Activated B cell treated with CpG ODN at 0.5 μM for 24 hours (primary cell): ENCODE measurements at regions of chr16 and their contacts with region 1.

Region 1: GRCh38 chr16:2155091-2156021 is at the start of gene TRAF7:
- DNase-seq: peak; percentile 91
- ATAC-seq: peak; percentile 92
- H3K4me3 Mint-ChIP-seq: peak within 1 kb of the TSS; percentile 95
- H3K27ac Mint-ChIP-seq: peak within 1 kb of the TSS; percentile 83
- H3K4me1 Mint-ChIP-seq: peaks cover 77% of the 10 kb centered on the region
- H3K27me3 Mint-ChIP-seq: no peaks in the 10 kb centered on the region
- CTCF ChIP-seq: no peak
- total RNA-seq, gene TRAF7: 72.7 and 78.1 TPM in 2 replicates

Region 2: GRCh38 chr16:154223-155030 is 2000.9 kb before region 1 on chr16:
- CTCF ChIA-PET with region 1: no interaction called
- POLR2A ChIA-PET with region 1: no interaction called
- intact Hi-C with region 1: no loop called
- DNase-seq: peak; percentile 31
- ATAC-seq: peak; percentile 57
- H3K4me3 Mint-ChIP-seq: peak overlapping the region; percentile 78
- H3K27ac Mint-ChIP-seq: no peak overlapping the region
- H3K4me1 Mint-ChIP-seq: peaks cover 9% of the 10 kb centered on the region
- H3K27me3 Mint-ChIP-seq: peaks cover 34% of the 10 kb centered on the region
- CTCF ChIP-seq: no peak

Region 3: GRCh38 chr16:1863681-1864460 is 291.5 kb before region 1 on chr16:
- CTCF ChIA-PET with region 1: no interaction called
- POLR2A ChIA-PET with region 1: no interaction called
- intact Hi-C with region 1: loop called (anchors 2 kb)
- DNase-seq: no peak
- ATAC-seq: peak; percentile 40
- H3K4me3 Mint-ChIP-seq: no peak overlapping the region
- H3K27ac Mint-ChIP-seq: no peak overlapping the region
- H3K4me1 Mint-ChIP-seq: no peaks in the 10 kb centered on the region
- H3K27me3 Mint-ChIP-seq: peaks cover 23% of the 10 kb centered on the region
- CTCF ChIP-seq: no peak

Region 4: DNA sequence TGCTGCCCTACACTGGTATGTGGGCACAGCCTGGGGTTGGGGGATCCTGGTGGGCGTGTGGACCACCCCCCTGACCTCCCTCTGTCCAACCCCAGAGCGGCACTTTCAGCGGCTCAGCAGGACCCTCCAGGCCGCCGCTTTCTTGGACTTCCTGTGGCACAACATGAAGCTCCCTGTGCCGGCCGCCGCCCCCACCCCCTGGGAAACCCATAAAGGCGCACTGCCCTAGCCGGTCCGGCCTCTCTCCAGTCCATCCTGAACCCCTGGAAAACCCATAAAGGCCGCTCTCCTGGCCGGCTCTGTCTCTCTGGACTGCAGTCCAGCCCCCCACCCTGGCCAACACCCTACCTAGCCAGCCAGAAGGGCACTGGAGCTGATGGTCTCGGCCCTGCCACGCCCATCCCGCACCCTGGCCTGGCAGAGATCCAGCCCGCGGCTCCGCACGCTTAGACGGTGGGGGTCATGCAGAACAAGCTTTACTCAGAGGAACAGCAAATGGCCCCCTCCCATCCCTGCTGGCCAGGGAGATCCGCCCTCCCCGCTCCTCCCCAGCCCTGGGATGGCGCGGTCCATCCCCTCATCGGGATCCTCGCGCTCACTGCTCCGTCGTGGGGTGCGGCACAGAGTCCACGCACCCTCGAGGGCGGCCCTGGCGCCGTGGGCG is 176.8 kb before region 1 on chr16:
- CTCF ChIA-PET with region 1: no interaction called
- POLR2A ChIA-PET with region 1: interaction called, 11 read pairs
- intact Hi-C with region 1: no loop called
- DNase-seq: no peak
- ATAC-seq: no peak
- H3K4me3 Mint-ChIP-seq: no peak overlapping the region
- H3K27ac Mint-ChIP-seq: no peak overlapping the region
- H3K4me1 Mint-ChIP-seq: peaks cover 14% of the 10 kb centered on the region
- H3K27me3 Mint-ChIP-seq: peaks cover 14% of the 10 kb centered on the region
- CTCF ChIP-seq: no peak

Region 5: DNA sequence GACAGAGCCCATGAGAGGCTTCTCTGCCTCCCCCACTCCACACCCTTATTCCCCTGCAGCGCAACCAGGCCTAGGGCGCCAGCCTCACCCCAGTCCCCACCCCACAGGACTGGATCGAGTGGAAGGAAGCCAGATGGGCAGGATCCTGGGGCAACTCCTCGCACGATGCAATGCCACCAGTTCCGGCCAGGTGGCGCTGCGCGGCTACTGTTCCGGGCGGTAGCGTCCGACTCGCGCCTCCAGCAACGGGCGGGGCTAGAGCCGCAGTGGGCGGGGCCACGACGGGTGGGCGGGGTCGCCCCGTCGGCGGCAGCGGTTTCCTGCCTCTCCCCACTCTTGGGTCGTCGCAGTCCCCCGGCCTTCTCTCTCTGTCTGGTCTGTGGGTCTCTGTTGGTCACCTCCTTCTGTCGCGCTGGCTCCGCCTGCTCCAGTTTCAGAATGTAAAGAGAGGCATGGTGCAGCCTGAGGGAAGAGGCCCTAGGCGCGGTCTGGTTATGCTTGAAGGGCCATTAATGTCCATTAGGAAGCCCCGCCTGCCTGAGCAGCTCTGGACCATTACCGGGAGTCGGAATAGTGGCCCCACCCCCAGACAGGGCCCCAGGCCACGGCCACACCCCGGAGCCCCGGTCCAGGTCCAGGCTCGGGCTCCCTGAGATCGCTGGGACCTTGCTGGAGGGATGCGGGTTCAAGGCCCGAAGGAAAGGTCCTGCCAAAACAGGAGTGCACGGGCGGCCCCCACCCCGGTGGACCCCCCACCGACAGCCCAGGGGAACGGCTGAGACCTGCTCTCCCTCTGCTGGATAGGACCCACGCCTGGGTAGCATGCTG is 132.0 kb before region 1 on chr16:
- CTCF ChIA-PET with region 1: interaction called, 3 read pairs
- POLR2A ChIA-PET with region 1: interaction called, 21 read pairs
- intact Hi-C with region 1: loop called (anchors 1 kb)
- DNase-seq: peak; percentile 97
- ATAC-seq: peak; percentile 94
- H3K4me3 Mint-ChIP-seq: peak overlapping the region; percentile 79
- H3K27ac Mint-ChIP-seq: peak overlapping the region; percentile 73
- H3K4me1 Mint-ChIP-seq: peaks cover 24% of the 10 kb centered on the region
- H3K27me3 Mint-ChIP-seq: peaks cover 27% of the 10 kb centered on the region
- CTCF ChIP-seq: peak; percentile 82

Region 6: DNA sequence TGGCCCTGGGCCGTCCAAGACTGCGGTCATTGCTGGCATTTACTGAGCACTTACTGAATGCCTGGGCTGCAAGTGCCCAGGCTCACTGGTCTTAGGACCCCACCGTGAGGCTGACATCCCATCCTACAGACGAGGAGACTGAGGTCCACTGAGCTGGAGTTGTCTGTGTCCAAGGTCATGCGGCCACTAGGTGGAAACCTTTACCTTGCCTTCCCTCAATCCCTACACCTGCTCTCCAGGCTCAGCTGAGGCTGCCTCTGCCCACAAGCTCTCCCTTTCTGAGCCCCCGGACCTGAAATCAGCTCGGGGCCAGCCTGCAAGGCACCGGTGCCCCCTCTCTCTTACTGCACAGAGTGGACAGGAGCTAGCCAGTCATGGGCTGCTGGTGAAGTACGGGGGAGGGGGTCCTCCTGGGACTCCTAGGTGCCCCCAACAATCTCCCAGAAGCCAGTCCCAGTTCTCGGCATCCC is 39.5 kb after region 1 on chr16:
- CTCF ChIA-PET with region 1: no interaction called
- POLR2A ChIA-PET with region 1: interaction called, 26 read pairs
- intact Hi-C with region 1: no loop called
- DNase-seq: no peak
- ATAC-seq: peak; percentile 76
- H3K4me3 Mint-ChIP-seq: peak overlapping the region; percentile 56
- H3K27ac Mint-ChIP-seq: no peak overlapping the region
- H3K4me1 Mint-ChIP-seq: peaks cover 8% of the 10 kb centered on the region
- H3K27me3 Mint-ChIP-seq: peaks cover 19% of the 10 kb centered on the region
- CTCF ChIP-seq: no peak

Region 7: GRCh38 chr16:2251483-2252240 is 96.3 kb after region 1 on chr16 and contains the start of gene ECI1:
- CTCF ChIA-PET with region 1: interaction called, 10 read pairs
- POLR2A ChIA-PET with region 1: interaction called, 61 read pairs
- intact Hi-C with region 1: loop called (anchors 1 kb)
- DNase-seq: peak; percentile 85
- ATAC-seq: peak; percentile 90
- H3K4me3 Mint-ChIP-seq: peak within 1 kb of the TSS; percentile 86
- H3K27ac Mint-ChIP-seq: peak within 1 kb of the TSS; percentile 90
- H3K4me1 Mint-ChIP-seq: peaks cover 35% of the 10 kb centered on the region
- H3K27me3 Mint-ChIP-seq: no peaks in the 10 kb centered on the region
- CTCF ChIP-seq: no peak
- total RNA-seq, gene ECI1: 38.1 and 43.0 TPM in 2 replicates

Region 8: GRCh38 chr16:2507052-2507659 is 351.8 kb after region 1 on chr16:
- CTCF ChIA-PET with region 1: no interaction called
- POLR2A ChIA-PET with region 1: interaction called, 16 read pairs
- intact Hi-C with region 1: no loop called
- DNase-seq: peak; percentile 51
- ATAC-seq: peak; percentile 89
- H3K4me3 Mint-ChIP-seq: peak overlapping the region; percentile 33
- H3K27ac Mint-ChIP-seq: peak overlapping the region; percentile 89
- H3K4me1 Mint-ChIP-seq: peaks cover 62% of the 10 kb centered on the region
- H3K27me3 Mint-ChIP-seq: no peaks in the 10 kb centered on the region
- CTCF ChIP-seq: no peak